Activated B cell treated with CpG ODN at 0.5 μM for 24 hours (primary cell): ENCODE measurements at regions of chr2 and their contacts with region 1.

Region 1: DNA sequence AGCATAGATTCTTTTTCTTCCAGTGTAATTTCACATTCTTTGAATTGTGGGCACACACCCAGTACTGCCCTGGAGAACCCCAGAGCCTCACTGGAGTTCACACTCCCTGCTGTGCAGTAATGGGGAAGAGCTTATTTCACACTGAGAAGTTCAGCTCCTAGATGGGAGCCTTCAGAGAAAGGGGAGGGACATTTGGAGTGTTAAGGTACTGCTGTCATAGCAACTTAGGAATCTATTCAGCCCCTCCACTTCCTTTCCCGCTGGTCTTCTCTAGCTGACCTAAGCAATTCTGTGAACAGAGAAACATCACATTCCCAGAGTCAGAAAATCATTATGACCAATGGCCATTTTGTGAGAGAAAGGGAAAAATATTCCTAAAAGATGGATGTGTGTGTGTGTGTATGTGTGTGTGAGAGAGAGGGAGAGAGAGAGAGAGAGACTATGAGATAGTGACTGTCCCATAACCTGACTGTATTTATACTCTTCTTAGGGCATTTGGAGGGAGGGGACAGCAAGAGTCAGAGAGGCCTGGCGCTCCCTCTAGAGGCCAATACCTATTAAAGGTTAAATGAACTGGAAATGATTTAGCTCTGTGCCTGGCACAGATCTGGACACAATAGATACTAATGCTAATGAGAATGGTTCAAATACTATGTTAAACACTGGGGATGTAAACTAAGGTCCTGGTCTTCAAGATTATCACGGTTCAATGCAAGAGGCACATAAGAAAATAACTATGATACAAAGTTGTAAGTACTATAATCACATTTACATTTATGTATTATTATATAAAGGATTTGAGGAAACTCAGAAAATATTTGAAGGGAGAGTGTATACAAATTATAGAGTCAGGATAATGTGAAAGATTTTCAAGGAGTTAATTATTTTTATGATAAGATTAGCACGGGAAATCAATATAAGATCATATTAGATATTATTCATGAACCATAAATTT is 41.5 kb upstream of the RPE start:
- DNase-seq: no peak
- ATAC-seq: peak; percentile 47
- H3K4me3 Mint-ChIP-seq: no peak overlapping the region
- H3K27ac Mint-ChIP-seq: no peak overlapping the region
- H3K4me1 Mint-ChIP-seq: no peaks in the 10 kb centered on the region
- H3K27me3 Mint-ChIP-seq: peaks cover 8% of the 10 kb centered on the region
- CTCF ChIP-seq: peak; percentile 31

Region 2: GRCh38 chr2:208392300-208393080 is 1568.5 kb before region 1 on chr2:
- CTCF ChIA-PET with region 1: no interaction called
- POLR2A ChIA-PET with region 1: no interaction called
- intact Hi-C with region 1: loop called (anchors 2 kb)
- DNase-seq: no peak
- ATAC-seq: no peak
- H3K4me3 Mint-ChIP-seq: no peak overlapping the region
- H3K27ac Mint-ChIP-seq: no peak overlapping the region
- H3K4me1 Mint-ChIP-seq: no peaks in the 10 kb centered on the region
- H3K27me3 Mint-ChIP-seq: peaks cover 3% of the 10 kb centered on the region
- CTCF ChIP-seq: no peak

Region 3: DNA sequence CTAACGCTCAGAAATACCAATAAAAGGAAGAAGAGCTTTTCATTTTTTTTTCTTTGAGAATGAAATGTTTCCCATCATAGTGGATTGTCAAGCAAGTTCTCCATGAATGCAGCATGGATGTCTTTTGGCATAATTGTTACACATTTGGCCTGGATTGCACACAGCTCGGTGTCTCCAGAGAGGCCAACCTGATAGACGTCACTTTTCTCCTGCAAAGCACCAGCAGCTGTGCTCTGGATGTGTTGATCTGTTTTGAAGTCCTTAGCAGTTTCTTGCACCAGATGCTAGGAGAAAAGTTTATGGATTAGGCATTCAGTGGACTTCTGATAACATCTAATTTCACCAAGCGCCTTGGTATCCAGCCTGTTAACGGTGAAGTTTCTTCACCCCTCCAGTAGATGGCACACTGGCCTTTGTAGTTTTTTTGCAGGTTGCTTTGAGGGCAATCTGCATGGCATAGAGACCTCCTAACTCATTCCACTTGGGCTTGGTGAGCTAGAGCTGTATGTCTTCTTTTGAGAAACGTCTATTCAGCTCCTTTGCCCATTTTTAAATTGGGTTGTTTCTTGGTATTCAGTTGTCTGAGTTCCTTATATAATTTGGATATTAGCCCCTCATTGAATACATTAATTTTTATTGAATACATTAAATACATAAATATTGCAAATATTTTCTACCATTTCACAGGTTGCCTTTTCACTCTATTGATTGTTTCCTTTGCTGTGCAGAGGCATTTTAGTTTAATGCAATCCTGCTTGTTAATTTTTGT is 1494.6 kb before region 1 on chr2:
- CTCF ChIA-PET with region 1: interaction called, 3 read pairs
- POLR2A ChIA-PET with region 1: no interaction called
- intact Hi-C with region 1: loop called (anchors 5 kb)
- DNase-seq: no peak
- ATAC-seq: no peak
- H3K4me3 Mint-ChIP-seq: no peak overlapping the region
- H3K27ac Mint-ChIP-seq: no peak overlapping the region
- H3K4me1 Mint-ChIP-seq: no peaks in the 10 kb centered on the region
- H3K27me3 Mint-ChIP-seq: peaks cover 16% of the 10 kb centered on the region
- CTCF ChIP-seq: no peak